RWPE1 (cell line): ENCODE measurements at regions of chr1 and their contacts with region 1.

Region 1: GRCh38 chr1:32247983-32248889 is 1.2 kb downstream of the FAM167B start:
- DNase-seq: peak; percentile 67
- H3K27ac ChIP-seq: peak overlapping the region; percentile 66
- CTCF ChIP-seq: peak; percentile 82

Region 2: DNA sequence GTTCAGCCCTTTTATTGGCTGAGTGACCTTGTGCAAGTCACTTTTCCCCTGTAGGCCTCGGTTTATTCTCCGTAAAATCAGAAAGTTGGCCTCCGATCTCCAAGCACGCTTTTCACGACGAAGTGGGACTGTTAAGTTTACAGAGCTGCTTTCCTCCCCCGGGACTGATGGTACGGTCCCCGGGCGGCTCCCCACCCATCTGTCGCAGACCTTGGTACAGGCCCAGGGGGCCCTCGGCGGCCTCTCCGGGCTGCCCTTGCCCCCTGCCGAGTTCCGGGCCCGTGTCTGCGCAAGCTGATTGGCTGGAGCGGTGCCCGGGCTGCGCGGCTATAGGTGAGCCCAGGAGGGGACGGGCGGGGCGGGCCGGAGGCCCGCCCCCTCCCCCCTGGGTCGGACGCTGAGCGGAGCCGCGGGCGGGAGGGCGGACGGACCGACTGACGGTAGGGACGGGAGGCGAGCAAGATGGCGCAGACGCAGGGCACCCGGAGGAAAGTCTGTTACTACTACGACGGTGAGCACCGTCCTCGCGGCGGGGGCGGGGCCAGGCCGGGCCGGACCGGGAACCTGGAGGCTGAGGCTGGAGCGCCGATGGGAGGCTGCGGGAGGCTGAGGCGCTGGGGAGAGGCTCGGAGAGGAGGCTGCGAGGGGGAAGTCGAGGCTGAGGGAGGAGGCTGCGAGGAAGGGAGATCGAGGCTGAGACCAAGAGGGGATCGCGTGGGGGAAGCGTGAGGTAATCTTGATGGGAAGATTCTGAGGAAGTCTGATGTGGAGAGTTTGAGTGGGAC is 43.7 kb after region 1 on chr1 and contains the start of gene HDAC1:
- CTCF ChIA-PET with region 1: interaction called, 11 read pairs
- POLR2A ChIA-PET with region 1: no interaction called
- DNase-seq: peak; percentile 99
- H3K27ac ChIP-seq: peak within 1 kb of the TSS; percentile 82
- CTCF ChIP-seq: no peak